MCF 10A (cell line): ENCODE measurements at regions of chr4 and their contacts with region 1.

Region 1: DNA sequence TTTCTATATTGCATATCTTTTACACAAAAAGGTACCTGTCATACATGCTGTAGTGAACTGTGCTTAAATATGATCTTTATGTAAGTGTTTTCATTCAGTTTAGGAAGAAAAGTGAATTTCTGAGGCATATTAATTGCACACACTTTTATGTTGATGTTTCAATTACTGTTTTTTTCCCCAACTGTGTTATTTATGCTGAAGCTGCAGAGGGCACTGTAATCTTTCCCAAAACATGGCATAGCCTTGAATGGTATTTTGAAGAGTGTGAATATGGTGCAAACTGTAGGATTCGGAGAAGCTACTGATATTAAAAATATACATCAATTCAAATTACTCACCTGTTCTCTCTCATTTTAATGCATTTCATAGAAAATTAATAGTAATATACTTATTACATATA is 6.0 kb upstream of the CENPE start:
- DNase-seq: peak; percentile 46
- H3K4me3 Mint-ChIP-seq: no peak overlapping the region
- H3K27ac Mint-ChIP-seq: no peak overlapping the region
- H3K4me1 Mint-ChIP-seq: no peaks in the 10 kb centered on the region
- H3K27me3 Mint-ChIP-seq: no peaks in the 10 kb centered on the region
- CTCF ChIP-seq: peak; percentile 49

Region 2: DNA sequence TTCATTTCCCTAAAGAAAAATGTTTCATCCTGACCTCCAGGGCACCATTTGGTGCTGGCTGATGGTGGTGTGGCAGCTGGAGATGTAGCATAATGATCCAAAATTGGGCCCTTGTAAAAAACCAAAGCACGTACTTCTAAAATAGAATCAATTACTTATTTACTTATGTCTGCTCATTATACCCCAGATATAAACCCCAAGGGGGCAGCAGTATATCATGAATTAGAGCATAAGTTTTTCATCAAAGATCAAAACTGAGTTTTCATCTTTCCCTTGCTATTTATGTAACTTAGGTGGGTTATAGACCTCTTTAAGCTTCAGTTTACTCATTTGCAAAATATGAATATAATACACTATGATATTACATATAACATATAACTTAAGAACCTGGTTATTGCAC is 274.6 kb after region 1 on chr4:
- CTCF ChIA-PET with region 1: no interaction called
- POLR2A ChIA-PET with region 1: no interaction called
- intact Hi-C with region 1: loop called (anchors 5 kb)
- DNase-seq: peak; percentile 33
- H3K4me3 Mint-ChIP-seq: no peak overlapping the region
- H3K27ac Mint-ChIP-seq: no peak overlapping the region
- H3K4me1 Mint-ChIP-seq: no peaks in the 10 kb centered on the region
- H3K27me3 Mint-ChIP-seq: no peaks in the 10 kb centered on the region
- CTCF ChIP-seq: no peak

Region 3: DNA sequence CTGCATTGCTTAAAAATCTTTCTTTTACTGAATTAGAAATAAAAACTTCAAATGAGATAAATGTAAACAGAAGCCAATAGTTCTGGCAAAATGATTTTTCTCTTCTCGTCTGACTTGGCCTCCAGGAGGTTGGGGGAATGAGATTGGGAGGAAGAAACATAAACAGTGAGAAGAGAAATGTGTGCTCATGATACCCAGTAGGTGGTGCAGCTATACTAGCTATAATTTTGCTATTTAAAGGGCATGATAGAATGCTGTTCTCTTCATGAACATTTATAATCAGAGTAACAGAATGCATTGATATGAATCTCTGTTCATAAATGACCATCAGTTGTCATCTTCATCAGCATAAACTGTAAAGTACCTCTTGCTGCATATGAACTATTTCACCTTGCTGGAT is 430.1 kb after region 1 on chr4:
- CTCF ChIA-PET with region 1: interaction called, 6 read pairs
- POLR2A ChIA-PET with region 1: no interaction called
- intact Hi-C with region 1: loop called (anchors 2 kb)
- DNase-seq: peak; percentile 25
- H3K4me3 Mint-ChIP-seq: no peak overlapping the region
- H3K27ac Mint-ChIP-seq: no peak overlapping the region
- H3K4me1 Mint-ChIP-seq: no peaks in the 10 kb centered on the region
- H3K27me3 Mint-ChIP-seq: no peaks in the 10 kb centered on the region
- CTCF ChIP-seq: peak; percentile 22

Region 4: GRCh38 chr4:103786014-103786413 is 581.9 kb after region 1 on chr4:
- CTCF ChIA-PET with region 1: interaction called, 24 read pairs
- POLR2A ChIA-PET with region 1: no interaction called
- intact Hi-C with region 1: loop called (anchors 1 kb)
- DNase-seq: peak; percentile 64
- H3K4me3 Mint-ChIP-seq: no peak overlapping the region
- H3K27ac Mint-ChIP-seq: no peak overlapping the region
- H3K4me1 Mint-ChIP-seq: no peaks in the 10 kb centered on the region
- H3K27me3 Mint-ChIP-seq: no peaks in the 10 kb centered on the region
- CTCF ChIP-seq: peak; percentile 58

Region 5: GRCh38 chr4:103934178-103934789 is 730.2 kb after region 1 on chr4:
- CTCF ChIA-PET with region 1: interaction called, 5 read pairs
- POLR2A ChIA-PET with region 1: interaction called, 5 read pairs
- intact Hi-C with region 1: loop called (anchors 2 kb)
- DNase-seq: peak; percentile 67
- H3K4me3 Mint-ChIP-seq: no peak overlapping the region
- H3K27ac Mint-ChIP-seq: no peak overlapping the region
- H3K4me1 Mint-ChIP-seq: no peaks in the 10 kb centered on the region
- H3K27me3 Mint-ChIP-seq: no peaks in the 10 kb centered on the region
- CTCF ChIP-seq: peak; percentile 73

Region 6: GRCh38 chr4:104022831-104023230 is 818.7 kb after region 1 on chr4:
- CTCF ChIA-PET with region 1: no interaction called
- POLR2A ChIA-PET with region 1: no interaction called
- intact Hi-C with region 1: no loop called
- DNase-seq: no peak
- H3K4me3 Mint-ChIP-seq: no peak overlapping the region
- H3K27ac Mint-ChIP-seq: no peak overlapping the region
- H3K4me1 Mint-ChIP-seq: no peaks in the 10 kb centered on the region
- H3K27me3 Mint-ChIP-seq: no peaks in the 10 kb centered on the region
- CTCF ChIP-seq: no peak

Region 7: GRCh38 chr4:104064646-104065577 is 860.8 kb after region 1 on chr4:
- CTCF ChIA-PET with region 1: no interaction called
- POLR2A ChIA-PET with region 1: no interaction called
- intact Hi-C with region 1: no loop called
- DNase-seq: peak; percentile 72
- H3K4me3 Mint-ChIP-seq: no peak overlapping the region
- H3K27ac Mint-ChIP-seq: peak overlapping the region; percentile 2
- H3K4me1 Mint-ChIP-seq: no peaks in the 10 kb centered on the region
- H3K27me3 Mint-ChIP-seq: no peaks in the 10 kb centered on the region
- CTCF ChIP-seq: peak; percentile 63